ENCODE measurements at regions of chr15 and their contacts with region 1.

Region 1: DNA sequence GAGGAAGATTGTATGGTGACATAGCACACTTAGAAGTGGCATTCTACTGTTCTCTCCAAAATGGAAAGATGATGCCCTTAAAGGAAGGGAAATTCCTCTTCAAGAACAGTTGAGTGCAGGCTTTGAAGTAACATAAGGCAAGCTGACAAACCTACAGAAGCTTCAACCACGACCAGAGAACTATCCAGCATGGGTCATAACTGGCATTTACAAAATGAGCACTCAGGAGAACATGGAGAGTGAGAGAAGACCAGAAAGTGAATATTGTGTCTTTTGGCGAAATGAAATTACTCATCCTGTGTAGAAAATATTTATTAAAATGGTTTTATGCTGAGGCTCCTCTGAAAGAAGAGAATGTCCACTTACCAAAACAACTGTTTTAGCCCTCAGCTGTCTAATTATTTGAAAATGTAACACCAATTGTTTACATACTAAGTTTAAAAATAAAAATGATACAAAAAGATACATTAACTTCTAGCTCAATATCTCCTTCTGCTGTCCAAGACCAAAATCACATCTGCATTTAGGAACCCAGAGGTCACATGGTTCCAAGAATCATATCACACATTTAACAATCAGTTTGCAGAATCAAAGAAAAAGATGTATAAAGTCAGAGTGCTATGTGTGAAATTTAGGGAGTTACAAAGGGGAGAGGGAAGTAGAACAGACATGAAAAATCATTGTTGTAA is 216.9 kb downstream of the ATP8B4 start:
- DNase-seq: peak in 2 of 3 donors; percentile 21 to 27
- H3K4me3 ChIP-seq: no peak overlapping the region
- H3K27ac ChIP-seq: no peak overlapping the region
- H3K4me1 ChIP-seq: peaks cover 0 to 2% (median 0%) of the 10 kb centered on the region in 4 experiments
- H3K27me3 ChIP-seq: no peaks in the 10 kb centered on the region

Region 2: GRCh38 chr15:49718234-49718633 is 183.9 kb before region 1 on chr15:
- CTCF ChIA-PET with region 1: no interaction called
- POLR2A ChIA-PET with region 1: no interaction called
- DNase-seq: peak in 2 of 3 donors; percentile 33 to 40
- H3K4me3 ChIP-seq: peak overlapping the region in 1 of 7 experiments; percentile 24
- H3K27ac ChIP-seq: no peak overlapping the region
- H3K4me1 ChIP-seq: peaks cover 4 to 36% (median 21%) of the 10 kb centered on the region in 4 experiments
- H3K27me3 ChIP-seq: no peaks in the 10 kb centered on the region

Region 3: GRCh38 chr15:49918121-49918520 is 16.0 kb after region 1 on chr15:
- CTCF ChIA-PET with region 1: interaction called, 11 read pairs
- POLR2A ChIA-PET with region 1: no interaction called
- DNase-seq: no peak
- H3K4me3 ChIP-seq: no peak overlapping the region
- H3K27ac ChIP-seq: no peak overlapping the region
- H3K4me1 ChIP-seq: peaks cover 0 to 21% (median 5%) of the 10 kb centered on the region in 4 experiments
- H3K27me3 ChIP-seq: no peaks in the 10 kb centered on the region

Region 4: GRCh38 chr15:49979705-49980382 is 77.7 kb after region 1 on chr15:
- CTCF ChIA-PET with region 1: no interaction called
- POLR2A ChIA-PET with region 1: no interaction called
- DNase-seq: no peak
- H3K4me3 ChIP-seq: no peak overlapping the region
- H3K27ac ChIP-seq: no peak overlapping the region
- H3K4me1 ChIP-seq: no peaks in the 10 kb centered on the region
- H3K27me3 ChIP-seq: no peaks in the 10 kb centered on the region

Measured in common myeloid progenitor, CD34-positive (primary cell).